Activated CD4-positive, alpha-beta memory T cell treated with anti-CD3 and anti-CD28 coated beads, Interleukin-2, amount 10 ng/mL, durations not matched to agents 7 days and 5 days (primary cell): ENCODE measurements at regions of chr3 and their contacts with region 1.

Region 1: DNA sequence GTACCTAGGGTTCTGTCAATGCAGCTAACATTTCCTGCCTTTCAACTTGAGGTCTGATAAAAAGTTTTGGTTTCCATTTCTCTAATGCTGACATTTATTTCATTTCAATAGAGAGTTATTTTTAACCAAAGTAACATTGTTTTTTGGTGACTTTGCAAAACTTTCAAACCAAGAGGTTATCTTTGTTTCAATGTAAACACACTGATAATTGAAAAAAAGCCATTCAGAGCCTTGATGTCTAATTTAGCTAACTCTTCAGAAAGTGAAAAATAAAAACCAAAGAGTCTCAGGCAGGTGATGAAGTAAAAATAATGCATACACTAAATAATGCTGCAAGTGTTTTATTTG is 9.6 kb upstream of the TIPARP start:
- DNase-seq: no peak
- H3K4me3 Mint-ChIP-seq: peak overlapping the region; percentile 59
- H3K27ac Mint-ChIP-seq: peak overlapping the region; percentile 92
- H3K4me1 Mint-ChIP-seq: peaks cover 68% of the 10 kb centered on the region
- H3K27me3 Mint-ChIP-seq: no peaks in the 10 kb centered on the region

Region 2: GRCh38 chr3:156614642-156615511 is 49.9 kb before region 1 on chr3:
- CTCF ChIA-PET with region 1: no interaction called
- POLR2A ChIA-PET with region 1: no interaction called
- DNase-seq: no peak
- H3K4me3 Mint-ChIP-seq: no peak overlapping the region
- H3K27ac Mint-ChIP-seq: no peak overlapping the region
- H3K4me1 Mint-ChIP-seq: peaks cover 12% of the 10 kb centered on the region
- H3K27me3 Mint-ChIP-seq: peaks cover 2% of the 10 kb centered on the region

Region 3: DNA sequence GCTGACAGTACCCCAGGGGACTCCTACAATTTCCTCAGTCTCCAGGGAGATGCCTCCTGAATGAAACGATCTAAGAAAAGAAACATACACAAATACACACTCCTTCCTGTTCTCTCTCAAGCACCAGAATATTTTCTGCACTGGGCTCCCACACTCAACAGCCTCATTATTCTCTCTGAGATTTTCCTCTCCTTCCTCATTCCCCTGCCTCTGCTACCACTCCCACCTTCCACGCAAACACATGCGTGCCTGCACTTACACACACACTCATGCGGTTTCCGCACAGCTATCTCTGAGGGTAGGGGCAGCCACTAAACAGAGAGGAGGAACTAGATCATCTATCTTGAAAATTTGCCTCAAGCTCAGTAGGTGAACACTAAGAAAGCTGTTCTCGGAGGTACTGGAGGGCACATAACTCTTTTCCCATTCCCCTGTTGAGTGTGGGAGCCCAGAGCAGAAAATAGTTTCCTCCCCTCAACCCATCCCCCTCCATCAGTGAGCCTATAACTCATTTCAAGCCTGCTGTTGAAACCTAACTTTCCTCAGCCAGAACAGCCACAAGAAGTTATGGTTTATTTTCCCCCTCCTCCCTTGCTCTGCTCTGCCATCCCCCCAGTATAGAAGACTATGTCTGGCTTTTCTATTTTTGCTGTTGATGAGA is 20.9 kb before region 1 on chr3:
- CTCF ChIA-PET with region 1: interaction called, 5 read pairs
- POLR2A ChIA-PET with region 1: interaction called, 16 read pairs
- DNase-seq: peak; percentile 66
- H3K4me3 Mint-ChIP-seq: peak overlapping the region; percentile 43
- H3K27ac Mint-ChIP-seq: peak overlapping the region; percentile 80
- H3K4me1 Mint-ChIP-seq: peaks cover 23% of the 10 kb centered on the region
- H3K27me3 Mint-ChIP-seq: peaks cover 8% of the 10 kb centered on the region